HAP-1 (cell line): ENCODE measurements at regions of chr5 and their contacts with region 1.

Region 1: GRCh38 chr5:154072414-154073171 is 33.8 kb downstream of the MFAP3 start:
- DNase-seq: peak; percentile 55 to 86
- H3K4me3 ChIP-seq: no peak overlapping the region
- H3K4me1 ChIP-seq: peaks cover under 1% of the 10 kb centered on the region; the same call in 1 of the 2 replicates
- H3K27me3 ChIP-seq: peaks cover 54% of the 10 kb centered on the region

Region 2: DNA sequence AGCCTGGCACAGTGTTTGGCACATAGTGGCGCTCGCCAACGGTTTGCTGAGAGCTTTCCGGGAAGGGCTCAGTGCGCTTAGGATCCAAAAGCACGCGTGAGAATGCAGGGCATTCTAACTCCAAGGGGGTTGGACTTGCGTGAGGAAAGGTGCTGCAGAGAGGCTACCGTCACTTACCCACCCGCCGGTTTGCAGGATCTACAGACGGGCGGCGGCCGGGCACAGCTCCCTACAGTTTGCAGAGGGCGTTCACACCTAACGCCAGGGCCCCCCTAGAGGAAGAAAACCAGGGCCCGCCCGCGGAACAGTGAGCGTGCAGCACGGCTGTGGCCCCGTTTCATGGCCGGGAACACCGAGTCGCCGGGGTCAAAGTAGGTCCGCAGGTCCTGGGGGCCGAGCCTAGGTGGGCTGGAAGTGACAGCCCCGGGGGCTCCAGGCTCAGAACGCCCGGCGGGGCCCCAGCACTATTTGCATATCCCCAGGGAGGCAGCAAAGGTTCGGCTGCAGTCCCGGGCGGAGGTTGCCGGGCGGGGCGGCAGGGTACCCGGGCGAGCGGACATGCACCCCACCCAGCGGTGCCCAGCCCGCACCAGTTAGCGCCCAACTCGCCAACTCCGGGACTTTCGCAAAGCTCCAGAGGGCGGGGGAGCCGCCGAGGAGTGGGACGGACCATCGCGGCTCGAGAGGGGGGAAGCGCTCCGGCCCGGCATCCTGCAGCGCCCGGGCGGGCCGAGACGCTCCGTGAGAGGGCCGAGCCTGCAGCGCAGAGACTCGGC is 117.4 kb after region 1 on chr5:
- in situ Hi-C with region 1: loop called (anchors 10 kb)
- DNase-seq: peak; percentile 53 to 86
- H3K4me3 ChIP-seq: peak overlapping the region; percentile 79
- H3K4me1 ChIP-seq: peaks cover 5% of the 10 kb centered on the region; the same call in 1 of the 2 replicates
- H3K27me3 ChIP-seq: no peaks in the 10 kb centered on the region